HCT116 (cell line): ENCODE measurements at regions of chr15 and their contacts with region 1.

Region 1: DNA sequence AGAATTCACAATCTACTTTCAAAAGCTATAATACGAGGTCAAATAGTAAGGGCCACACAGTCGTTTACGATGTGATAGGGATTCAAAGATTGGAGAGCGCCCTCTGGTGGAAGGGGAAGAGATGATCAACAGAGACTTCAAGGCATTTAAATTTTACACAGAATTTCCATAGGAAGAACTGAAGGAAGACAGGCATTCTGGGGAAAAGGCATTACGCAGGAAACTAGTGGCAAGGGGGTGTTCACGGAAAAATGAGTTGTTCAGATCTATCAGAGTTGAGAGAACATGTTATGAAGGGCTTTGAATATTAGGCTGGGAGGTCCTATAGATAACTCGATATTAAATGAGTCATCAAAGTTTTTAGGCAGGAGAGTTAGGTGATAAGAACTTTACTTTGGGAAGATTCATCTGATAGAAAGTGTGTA is 128.7 kb downstream of the FRMD5 start:
- DNase-seq: peak; percentile 68
- ATAC-seq: peak; percentile 93
- H3K4me3 ChIP-seq: no peak overlapping the region; a peak in 1 of 4 replicates
- H3K27ac ChIP-seq: no peak overlapping the region
- H3K4me1 ChIP-seq: peaks cover 0 to 15% of the 10 kb centered on the region in 2 experiments; a peak in 3 of 4 replicates
- H3K27me3 ChIP-seq: no peaks in the 10 kb centered on the region
- CTCF ChIP-seq: peak; percentile 72 to 94 (median 78)
- POLR2A ChIP-seq: no peak
- RAD21 ChIP-seq: peak; percentile 82

Region 2: GRCh38 chr15:43483306-43484128 is 582.8 kb before region 1 on chr15:
- CTCF ChIA-PET with region 1: no interaction called
- POLR2A ChIA-PET with region 1: no interaction called
- RAD21 ChIA-PET with region 1: no interaction called
- intact Hi-C with region 1: no loop called
- DNase-seq: no peak
- ATAC-seq: no peak
- H3K4me3 ChIP-seq: no peak overlapping the region
- H3K27ac ChIP-seq: no peak overlapping the region; the same call in 1 of the 2 replicates
- H3K4me1 ChIP-seq: no peaks in the 10 kb centered on the region
- H3K27me3 ChIP-seq: no peaks in the 10 kb centered on the region
- CTCF ChIP-seq: peak; percentile 16 to 45 (median 33); a peak in 3 of 6 replicates
- POLR2A ChIP-seq: no peak
- RAD21 ChIP-seq: peak; percentile 42

Region 3: DNA sequence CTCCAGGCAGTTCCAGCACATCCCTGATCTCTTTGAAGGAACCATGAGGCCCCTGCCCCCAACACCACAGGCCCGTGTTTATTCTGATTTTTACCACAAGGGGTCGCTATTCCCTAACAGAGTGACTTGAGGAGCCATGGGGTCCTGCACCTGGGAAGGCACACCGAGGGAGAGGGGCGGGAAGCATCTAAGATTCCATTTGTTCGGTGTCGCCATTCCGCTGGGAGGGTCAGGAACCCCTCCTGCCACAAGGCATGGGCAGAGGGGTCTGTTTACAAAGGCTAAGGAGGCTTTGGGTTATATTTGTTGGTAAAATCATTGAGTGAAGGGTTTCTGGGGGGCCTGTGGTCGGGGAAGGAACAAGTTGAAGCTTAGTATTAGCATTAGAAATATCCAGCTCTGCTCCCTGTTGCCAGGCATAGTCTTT is 162.5 kb before region 1 on chr15:
- CTCF ChIA-PET with region 1: interaction called, 4 read pairs
- POLR2A ChIA-PET with region 1: no interaction called
- RAD21 ChIA-PET with region 1: no interaction called
- intact Hi-C with region 1: loop called (anchors 1 kb)
- DNase-seq: peak; percentile 56
- ATAC-seq: peak; percentile 93
- H3K4me3 ChIP-seq: no peak overlapping the region
- H3K27ac ChIP-seq: no peak overlapping the region
- H3K4me1 ChIP-seq: no peaks in the 10 kb centered on the region; a peak in 2 of 4 replicates
- H3K27me3 ChIP-seq: no peaks in the 10 kb centered on the region
- CTCF ChIP-seq: peak; percentile 76 to 94 (median 82)
- POLR2A ChIP-seq: no peak
- RAD21 ChIP-seq: peak; percentile 95

Region 4: GRCh38 chr15:43939070-43939469 is 127.3 kb before region 1 on chr15:
- CTCF ChIA-PET with region 1: interaction called, 6 read pairs
- POLR2A ChIA-PET with region 1: no interaction called
- RAD21 ChIA-PET with region 1: interaction called in 1 of 2 experiments, 3 read pairs
- intact Hi-C with region 1: loop called (anchors 1 kb)
- DNase-seq: peak; percentile 12
- ATAC-seq: peak; percentile 78
- H3K4me3 ChIP-seq: no peak overlapping the region
- H3K27ac ChIP-seq: no peak overlapping the region
- H3K4me1 ChIP-seq: peaks cover 0 to 4% of the 10 kb centered on the region in 2 experiments; a peak in 1 of 4 replicates
- H3K27me3 ChIP-seq: no peaks in the 10 kb centered on the region
- CTCF ChIP-seq: peak; percentile 54 to 71 (median 64); a peak in 5 of 6 replicates
- POLR2A ChIP-seq: no peak
- RAD21 ChIP-seq: peak; percentile 64